Left lung (tissue), 14 donors: ENCODE measurements at regions of chr22 and their contacts with region 1.

Region 1: GRCh38 chr22:36144886-36145541 is 15.5 kb downstream of the APOL3 start:
- DNase-seq: peak in 3 of 4 donors; percentile 48 to 85 (median 62)
- ATAC-seq: peak; percentile 93
- H3K4me3 ChIP-seq: no peak overlapping the region
- H3K27ac ChIP-seq: no peak overlapping the region
- H3K4me1 ChIP-seq: peaks cover 0 to 26% of the 10 kb centered on the region in 2 donors
- H3K27me3 ChIP-seq: no peaks in the 10 kb centered on the region
- CTCF ChIP-seq: peak; percentile 62 to 73

Region 2: GRCh38 chr22:36180038-36180880 is 35.2 kb after region 1 on chr22:
- intact Hi-C with region 1: loop called in 1 of 2 experiments (anchors 5 kb)
- DNase-seq: peak; percentile 61 to 91 (median 80)
- ATAC-seq: peak; percentile 98
- H3K4me3 ChIP-seq: no peak overlapping the region
- H3K27ac ChIP-seq: no peak overlapping the region
- H3K4me1 ChIP-seq: peaks cover 0 to 9% of the 10 kb centered on the region in 2 donors
- H3K27me3 ChIP-seq: no peaks in the 10 kb centered on the region
- CTCF ChIP-seq: peak; percentile 92 to 93